CD4-positive, alpha-beta memory T cell (primary cell): ENCODE measurements at regions of chr7 and their contacts with region 1.

Region 1: GRCh38 chr7:111029574-111030251 is 61.2 kb upstream of the LRRN3 start:
- DNase-seq: peak in 1 of 5 donors; percentile 13
- H3K4me3 ChIP-seq: no peak overlapping the region
- H3K4me3 Mint-ChIP-seq: peak overlapping the region in 4 of 8 donors; percentile 7 to 47 (median 38)
- H3K27ac ChIP-seq: no peak overlapping the region
- H3K27ac Mint-ChIP-seq: peak overlapping the region in 3 of 7 donors; percentile 7 to 71 (median 69)
- H3K4me1 ChIP-seq: peaks cover 53% of the 10 kb centered on the region
- H3K4me1 Mint-ChIP-seq: peaks cover 33 to 53% (median 44%) of the 10 kb centered on the region in 4 donors
- H3K27me3 ChIP-seq: no peaks in the 10 kb centered on the region
- H3K27me3 Mint-ChIP-seq: no peaks in the 10 kb centered on the region

Region 2: GRCh38 chr7:110994028-110994967 is 35.4 kb before region 1 on chr7:
- CTCF ChIA-PET with region 1: no interaction called
- POLR2A ChIA-PET with region 1: no interaction called
- intact Hi-C with region 1: loop called (anchors 5 kb)
- DNase-seq: no peak
- H3K4me3 ChIP-seq: no peak overlapping the region
- H3K4me3 Mint-ChIP-seq: peak overlapping the region in 3 of 8 donors; percentile 6 to 42 (median 8)
- H3K27ac ChIP-seq: no peak overlapping the region
- H3K27ac Mint-ChIP-seq: peak overlapping the region; percentile 24 to 84 (median 74)
- H3K4me1 ChIP-seq: peaks cover 24% of the 10 kb centered on the region
- H3K4me1 Mint-ChIP-seq: peaks cover 20 to 25% (median 23%) of the 10 kb centered on the region in 4 donors
- H3K27me3 ChIP-seq: no peaks in the 10 kb centered on the region
- H3K27me3 Mint-ChIP-seq: no peaks in the 10 kb centered on the region

Region 3: GRCh38 chr7:111012799-111013675 is 16.7 kb before region 1 on chr7:
- CTCF ChIA-PET with region 1: interaction called, 7 read pairs
- POLR2A ChIA-PET with region 1: interaction called, 11 read pairs
- intact Hi-C with region 1: loop called (anchors 1 kb)
- DNase-seq: peak; percentile 39 to 58 (median 43)
- H3K4me3 ChIP-seq: peak overlapping the region; percentile 18 to 28
- H3K4me3 Mint-ChIP-seq: peak overlapping the region; percentile 49 to 85 (median 77)
- H3K27ac ChIP-seq: peak overlapping the region; percentile 54
- H3K27ac Mint-ChIP-seq: peak overlapping the region; percentile 68 to 91 (median 86)
- H3K4me1 ChIP-seq: peaks cover 69% of the 10 kb centered on the region
- H3K4me1 Mint-ChIP-seq: peaks cover 35 to 63% (median 50%) of the 10 kb centered on the region in 4 donors
- H3K27me3 ChIP-seq: no peaks in the 10 kb centered on the region
- H3K27me3 Mint-ChIP-seq: no peaks in the 10 kb centered on the region

Region 4: DNA sequence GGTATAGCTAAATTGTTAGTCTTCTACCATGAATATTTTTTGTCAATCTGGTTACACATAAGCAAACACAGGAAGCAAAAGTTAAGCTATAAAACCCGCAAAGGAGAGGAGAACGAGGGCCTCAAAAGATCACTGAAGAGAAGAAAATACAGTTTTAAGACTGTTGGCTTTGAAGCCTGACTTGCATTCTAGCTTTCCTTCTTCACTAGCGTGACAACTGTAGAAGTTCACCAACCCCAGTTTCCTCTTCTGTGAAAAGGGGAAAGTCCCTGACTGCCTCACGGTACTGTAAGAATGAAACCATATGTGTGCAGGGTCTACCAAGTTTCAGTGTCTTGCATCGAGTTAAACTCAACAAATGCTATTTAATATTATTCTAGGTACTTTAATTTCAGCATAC is 53.7 kb after region 1 on chr7:
- CTCF ChIA-PET with region 1: interaction called, 6 read pairs
- POLR2A ChIA-PET with region 1: interaction called, 18 read pairs
- intact Hi-C with region 1: loop called (anchors 2 kb)
- DNase-seq: peak; percentile 65 to 79 (median 70)
- H3K4me3 ChIP-seq: no peak overlapping the region
- H3K4me3 Mint-ChIP-seq: peak overlapping the region in 7 of 8 donors; percentile 7 to 82 (median 54)
- H3K27ac ChIP-seq: peak overlapping the region; percentile 13
- H3K27ac Mint-ChIP-seq: peak overlapping the region; percentile 50 to 96 (median 86)
- H3K4me1 ChIP-seq: peaks cover 48% of the 10 kb centered on the region
- H3K4me1 Mint-ChIP-seq: peaks cover 37 to 46% (median 39%) of the 10 kb centered on the region in 4 donors
- H3K27me3 ChIP-seq: no peaks in the 10 kb centered on the region
- H3K27me3 Mint-ChIP-seq: no peaks in the 10 kb centered on the region